ENCODE measurements at regions of chr14 and their contacts with region 1.

Region 1: DNA sequence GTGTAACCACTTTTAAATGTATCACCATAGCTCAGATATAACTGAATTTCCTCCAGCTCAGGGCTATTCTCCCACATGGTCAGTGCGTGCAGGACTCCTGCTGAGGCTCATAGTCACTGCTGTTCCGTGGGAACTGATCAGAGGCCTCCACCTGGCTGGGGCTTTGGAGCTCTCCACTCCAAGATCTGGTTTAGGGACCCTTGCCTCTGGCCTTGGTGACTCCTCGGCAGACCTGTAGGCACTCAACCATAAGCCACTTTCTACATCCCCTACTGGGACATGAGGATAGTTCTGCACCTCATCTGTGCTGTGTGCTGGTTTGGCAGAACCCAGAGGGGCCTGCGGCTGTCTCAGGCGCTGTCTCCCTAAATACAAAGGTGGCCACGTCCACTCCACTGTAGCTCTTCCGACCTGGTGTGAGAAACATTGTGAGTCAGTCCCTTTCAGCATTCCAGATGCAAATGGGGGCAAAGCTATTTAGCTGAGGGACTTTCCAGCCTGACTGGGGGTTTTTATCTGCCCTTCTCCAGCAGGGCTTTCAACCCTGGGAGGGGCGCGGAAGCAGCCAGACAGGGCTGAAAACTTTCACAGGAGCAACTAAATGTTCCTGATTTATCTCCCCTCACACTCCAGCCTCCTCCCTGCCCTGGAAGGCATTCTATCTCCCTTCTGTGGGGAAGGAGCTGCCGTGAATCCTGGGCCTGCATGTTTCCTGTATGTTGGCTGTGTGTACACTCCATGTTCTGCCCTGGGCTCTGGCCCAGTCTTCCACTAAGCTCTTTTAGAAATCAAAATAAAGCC is 218.3 kb upstream of the DAAM1 start:
- DNase-seq: no peak

Region 2: GRCh38 chr14:58765418-58765831 is 204.7 kb before region 1 on chr14:
- intact Hi-C with region 1: loop called (anchors 10 kb)
- DNase-seq: no peak

Region 3: DNA sequence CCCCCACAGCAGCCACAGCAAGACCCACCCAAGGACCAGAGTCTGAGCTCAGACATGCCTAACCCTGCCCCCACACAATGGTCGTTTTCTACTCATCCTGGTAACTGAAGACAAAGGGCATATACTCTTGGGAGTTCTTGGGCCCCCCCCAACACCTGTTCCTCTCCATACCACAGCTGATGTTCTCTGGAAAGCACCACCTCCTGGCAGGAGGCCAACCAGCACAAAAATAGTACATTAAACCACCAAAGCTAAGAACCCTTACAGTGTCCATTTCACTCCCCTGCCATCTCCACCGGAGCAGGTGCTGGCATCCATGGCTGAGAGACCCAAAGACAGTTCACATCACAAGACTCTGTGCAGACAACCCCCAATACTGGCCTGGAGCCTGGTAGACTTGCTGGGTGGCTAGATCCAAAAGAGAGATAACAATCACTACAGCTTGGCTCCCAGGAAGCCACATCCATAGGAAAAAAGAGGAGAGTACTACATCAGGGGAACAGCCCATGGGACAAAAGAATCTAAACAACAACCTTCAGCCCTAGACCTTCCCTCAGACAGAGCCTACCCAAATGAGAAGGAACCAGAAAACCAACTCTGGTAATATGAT is 137.8 kb after region 1 on chr14:
- intact Hi-C with region 1: no loop called
- DNase-seq: no peak